Activated CD4-positive, alpha-beta T cell treated with anti-CD3 and anti-CD28 coated beads for 36 hours (primary cell): ENCODE measurements at regions of chr11 and their contacts with region 1.

Region 1: GRCh38 chr11:3797329-3798095 is at the start of gene NUP98:
- DNase-seq: peak; percentile 100
- ATAC-seq: peak; percentile 98
- H3K4me3 Mint-ChIP-seq: peak within 1 kb of the TSS; percentile 99
- H3K27ac Mint-ChIP-seq: peak within 1 kb of the TSS; percentile 100
- H3K4me1 Mint-ChIP-seq: peaks cover 39% of the 10 kb centered on the region
- H3K27me3 Mint-ChIP-seq: no peaks in the 10 kb centered on the region
- total RNA-seq, gene NUP98: 96.0 to 134 TPM

Region 2: GRCh38 chr11:3378426-3379423 is 418.8 kb before region 1 on chr11 and contains the start of gene ZNF195:
- CTCF ChIA-PET with region 1: no interaction called
- POLR2A ChIA-PET with region 1: interaction called, 3 read pairs
- intact Hi-C with region 1: loop called in 1 of 2 experiments (anchors 5 kb)
- DNase-seq: peak; percentile 99
- ATAC-seq: peak; percentile 100
- H3K4me3 Mint-ChIP-seq: peak within 1 kb of the TSS; percentile 91
- H3K27ac Mint-ChIP-seq: peak within 1 kb of the TSS; percentile 93
- H3K4me1 Mint-ChIP-seq: peaks cover 47% of the 10 kb centered on the region
- H3K27me3 Mint-ChIP-seq: no peaks in the 10 kb centered on the region
- total RNA-seq, gene ZNF195: 32.6 to 36.2 TPM

Region 3: GRCh38 chr11:3781423-3781822 is 16.1 kb before region 1 on chr11:
- CTCF ChIA-PET with region 1: interaction called, 5 read pairs
- POLR2A ChIA-PET with region 1: interaction called, 8 read pairs
- intact Hi-C with region 1: loop called (anchors 1 kb)
- DNase-seq: no peak
- ATAC-seq: no peak
- H3K4me3 Mint-ChIP-seq: no peak overlapping the region
- H3K27ac Mint-ChIP-seq: peak overlapping the region; percentile 72
- H3K4me1 Mint-ChIP-seq: peaks cover 47% of the 10 kb centered on the region
- H3K27me3 Mint-ChIP-seq: no peaks in the 10 kb centered on the region

Region 4: GRCh38 chr11:3841426-3842350 is 44.2 kb after region 1 on chr11:
- CTCF ChIA-PET with region 1: interaction called, 3 read pairs
- POLR2A ChIA-PET with region 1: interaction called, 5 read pairs
- intact Hi-C with region 1: loop called (anchors 1 kb)
- DNase-seq: peak; percentile 97
- ATAC-seq: peak; percentile 30
- H3K4me3 Mint-ChIP-seq: peak overlapping the region; percentile 93
- H3K27ac Mint-ChIP-seq: peak overlapping the region; percentile 93
- H3K4me1 Mint-ChIP-seq: peaks cover 54% of the 10 kb centered on the region
- H3K27me3 Mint-ChIP-seq: no peaks in the 10 kb centered on the region

Region 5: DNA sequence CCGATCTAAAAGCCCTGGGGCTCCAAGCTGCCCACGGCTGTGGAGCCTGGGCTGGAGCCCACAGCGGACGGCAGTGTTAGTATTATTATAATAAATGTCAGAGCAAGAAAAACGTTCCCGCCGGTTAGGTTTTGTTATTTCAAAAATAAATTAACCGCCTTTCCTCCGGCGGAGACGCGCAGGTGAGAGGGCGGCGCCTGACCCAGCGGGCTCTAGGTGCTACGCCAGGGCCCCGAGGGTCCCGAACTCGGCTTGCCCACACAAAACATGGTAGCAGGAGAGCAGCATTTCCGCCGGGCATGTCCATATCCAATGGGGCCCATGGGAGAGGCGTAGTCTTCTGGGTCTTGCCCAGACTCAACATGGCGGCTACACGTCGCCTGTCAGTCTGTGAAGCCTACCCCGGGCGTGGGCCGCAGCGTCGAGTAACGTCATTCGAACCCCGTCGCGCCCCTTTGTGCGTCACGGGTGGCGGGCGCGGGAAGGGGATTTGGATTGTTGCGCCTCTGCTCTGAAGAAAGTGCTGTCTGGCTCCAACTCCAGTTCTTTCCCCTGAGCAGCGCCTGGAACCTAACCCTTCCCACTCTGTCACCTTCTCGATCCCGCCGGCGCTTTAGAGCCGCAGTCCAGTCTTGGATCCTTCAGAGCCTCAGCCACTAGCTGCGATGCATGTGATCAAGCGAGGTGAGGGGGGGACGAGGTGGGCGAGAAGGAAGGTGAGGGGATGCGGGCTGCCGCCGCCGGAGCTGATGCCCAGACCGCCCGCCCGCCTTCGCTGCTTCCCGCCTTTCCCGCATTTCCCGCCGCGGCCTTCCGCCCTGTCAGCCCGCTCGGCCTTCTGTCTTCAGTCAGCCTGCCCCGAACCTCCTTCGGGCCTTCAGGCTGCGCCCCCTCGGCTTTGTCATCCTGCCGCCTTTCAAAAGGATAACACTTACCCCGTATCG is 297.1 kb after region 1 on chr11 and contains the start of gene RRM1:
- CTCF ChIA-PET with region 1: no interaction called
- POLR2A ChIA-PET with region 1: interaction called, 4 read pairs
- intact Hi-C with region 1: loop called in 1 of 2 experiments (anchors 1 kb)
- DNase-seq: peak; percentile 96
- ATAC-seq: peak; percentile 96
- H3K4me3 Mint-ChIP-seq: peak within 1 kb of the TSS; percentile 98
- H3K27ac Mint-ChIP-seq: peak within 1 kb of the TSS; percentile 97
- H3K4me1 Mint-ChIP-seq: peaks cover 71% of the 10 kb centered on the region
- H3K27me3 Mint-ChIP-seq: no peaks in the 10 kb centered on the region
- total RNA-seq, gene RRM1: 220 to 259 TPM

Region 6: DNA sequence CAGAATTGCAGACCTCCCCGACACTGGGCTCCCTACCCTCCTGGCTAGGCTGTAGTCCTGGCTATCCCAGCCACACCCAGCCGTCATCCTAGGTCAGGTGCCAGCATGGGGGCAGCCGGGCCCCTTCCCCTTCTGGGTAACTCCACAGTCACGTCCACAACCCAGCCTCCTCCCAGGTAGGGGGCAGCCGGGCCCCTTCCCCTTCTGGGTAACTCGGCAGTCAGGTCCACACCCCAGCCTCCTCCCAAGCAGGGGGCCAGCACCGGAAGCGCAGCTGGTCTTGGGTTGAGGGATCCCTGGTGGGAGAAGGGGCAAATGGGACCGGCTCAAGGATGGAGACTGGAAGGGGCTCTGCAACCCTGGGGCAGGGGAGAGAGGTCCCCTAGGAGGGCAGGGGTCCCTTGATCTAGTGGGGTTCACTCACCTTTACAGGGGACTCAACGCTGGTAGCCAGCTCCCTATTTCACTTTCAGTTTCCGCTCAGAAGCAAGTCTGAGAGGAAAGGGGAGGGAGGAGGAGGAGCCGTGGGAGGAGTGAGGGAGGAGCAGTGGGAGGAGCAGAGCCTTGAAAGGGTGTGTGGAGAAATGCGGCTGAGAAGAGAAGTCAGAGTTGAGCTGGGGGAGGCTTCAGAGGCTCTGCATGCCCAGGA is 595.8 kb after region 1 on chr11 and contains the start of gene TRIM21:
- CTCF ChIA-PET with region 1: no interaction called
- POLR2A ChIA-PET with region 1: no interaction called
- intact Hi-C with region 1: loop called in 1 of 2 experiments (anchors 1 kb)
- DNase-seq: peak; percentile 93
- ATAC-seq: peak; percentile 99
- H3K4me3 Mint-ChIP-seq: peak within 1 kb of the TSS; percentile 93
- H3K27ac Mint-ChIP-seq: peak within 1 kb of the TSS; percentile 94
- H3K4me1 Mint-ChIP-seq: peaks cover 35% of the 10 kb centered on the region
- H3K27me3 Mint-ChIP-seq: peaks cover 5% of the 10 kb centered on the region
- total RNA-seq, gene TRIM21: 45.6 to 66.6 TPM

Region 7: GRCh38 chr11:5092821-5093585 is 1295.5 kb after region 1 on chr11:
- CTCF ChIA-PET with region 1: no interaction called
- POLR2A ChIA-PET with region 1: no interaction called
- intact Hi-C with region 1: no loop called
- DNase-seq: no peak
- ATAC-seq: no peak
- H3K4me3 Mint-ChIP-seq: no peak overlapping the region
- H3K27ac Mint-ChIP-seq: no peak overlapping the region
- H3K4me1 Mint-ChIP-seq: no peaks in the 10 kb centered on the region
- H3K27me3 Mint-ChIP-seq: peaks cover 8% of the 10 kb centered on the region